ENCODE measurements at regions of chr9 and their contacts with region 1.

Region 1: GRCh38 chr9:126781186-126782052 is 23.4 kb upstream of the ZBTB43 start:
- DNase-seq: no peak
- ATAC-seq: peak; percentile 99
- H3K4me3 ChIP-seq: no peak overlapping the region
- H3K27ac ChIP-seq: no peak overlapping the region
- H3K4me1 ChIP-seq: no peaks in the 10 kb centered on the region
- H3K27me3 ChIP-seq: no peaks in the 10 kb centered on the region; a peak in 1 of 4 replicates
- CTCF ChIP-seq: peak; percentile 91 to 92 (median 91); a peak in 5 of 6 replicates
- EP300 ChIP-seq: no peak
- POLR2A ChIP-seq: no peak
- RAD21 ChIP-seq: peak; percentile 88

Region 2: DNA sequence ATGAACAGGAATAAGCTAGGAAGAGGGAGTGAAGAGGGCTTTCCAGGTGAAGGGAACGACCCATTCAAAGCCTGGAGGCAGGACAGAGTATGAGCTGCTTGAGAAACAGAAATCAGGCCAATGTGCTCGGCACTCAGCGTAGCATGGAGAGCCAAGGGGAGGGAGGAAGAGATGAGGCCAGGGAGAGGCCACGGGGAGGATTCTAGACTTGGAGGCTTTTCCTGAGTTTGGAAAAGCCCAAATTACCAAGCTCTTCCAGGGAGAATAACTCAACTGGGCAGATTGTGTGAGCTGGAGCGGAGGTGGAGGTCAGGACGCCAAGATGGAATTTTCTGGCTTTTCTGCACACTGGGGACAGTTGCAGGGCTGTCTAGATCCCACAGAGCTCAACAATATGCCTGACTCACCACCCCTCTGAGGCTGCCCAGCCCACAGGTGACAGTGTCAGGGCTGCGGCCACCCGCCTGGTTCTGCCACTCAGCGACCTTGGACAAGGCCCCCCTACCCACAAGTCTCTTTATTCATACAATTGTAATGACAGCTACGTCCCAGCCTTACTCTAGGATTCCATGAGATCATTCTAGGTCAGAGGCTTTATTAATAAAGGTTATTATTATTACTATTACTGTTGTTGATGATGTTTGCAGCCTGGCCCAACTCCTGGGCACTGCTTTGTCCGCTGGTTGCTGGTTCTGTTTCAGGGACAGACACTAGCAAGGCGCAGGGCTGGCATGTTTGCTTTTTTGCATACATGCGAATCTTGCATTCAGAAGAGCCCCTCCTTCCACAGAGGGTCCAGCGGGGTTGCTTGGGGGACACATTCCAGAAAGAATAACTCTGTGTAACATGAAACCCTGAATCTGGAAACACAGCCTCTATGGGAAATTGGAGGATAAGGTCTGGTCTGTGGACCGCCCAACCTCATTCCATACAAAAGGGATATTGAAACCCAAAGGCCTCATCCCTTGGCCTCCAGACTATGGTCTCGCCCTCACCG is 177.1 kb before region 1 on chr9:
- CTCF ChIA-PET with region 1: interaction called, 5 read pairs
- POLR2A ChIA-PET with region 1: no interaction called
- RAD21 ChIA-PET with region 1: no interaction called
- SMC1A ChIA-PET with region 1: no interaction called
- in situ Hi-C with region 1: loop called (anchors 5 kb)
- intact Hi-C with region 1: no loop called
- DNase-seq: no peak
- ATAC-seq: no peak
- H3K4me3 ChIP-seq: no peak overlapping the region
- H3K27ac ChIP-seq: no peak overlapping the region
- H3K4me1 ChIP-seq: no peaks in the 10 kb centered on the region
- H3K27me3 ChIP-seq: peaks cover 0 to 2% of the 10 kb centered on the region in 2 experiments; a peak in 3 of 4 replicates
- CTCF ChIP-seq: no peak
- EP300 ChIP-seq: no peak
- POLR2A ChIP-seq: no peak
- RAD21 ChIP-seq: no peak

Region 3: GRCh38 chr9:126611592-126612325 is 169.7 kb before region 1 on chr9:
- CTCF ChIA-PET with region 1: interaction called, 5 read pairs
- POLR2A ChIA-PET with region 1: no interaction called
- RAD21 ChIA-PET with region 1: no interaction called
- SMC1A ChIA-PET with region 1: no interaction called
- in situ Hi-C with region 1: loop called (anchors 5 kb)
- intact Hi-C with region 1: loop called (anchors 5 kb)
- DNase-seq: no peak
- ATAC-seq: peak; percentile 96
- H3K4me3 ChIP-seq: no peak overlapping the region
- H3K27ac ChIP-seq: no peak overlapping the region
- H3K4me1 ChIP-seq: no peaks in the 10 kb centered on the region
- H3K27me3 ChIP-seq: peaks cover 16 to 24% of the 10 kb centered on the region in 2 experiments
- CTCF ChIP-seq: peak; percentile 70 to 78 (median 70)
- EP300 ChIP-seq: no peak
- POLR2A ChIP-seq: no peak
- RAD21 ChIP-seq: peak; percentile 46

Region 4: DNA sequence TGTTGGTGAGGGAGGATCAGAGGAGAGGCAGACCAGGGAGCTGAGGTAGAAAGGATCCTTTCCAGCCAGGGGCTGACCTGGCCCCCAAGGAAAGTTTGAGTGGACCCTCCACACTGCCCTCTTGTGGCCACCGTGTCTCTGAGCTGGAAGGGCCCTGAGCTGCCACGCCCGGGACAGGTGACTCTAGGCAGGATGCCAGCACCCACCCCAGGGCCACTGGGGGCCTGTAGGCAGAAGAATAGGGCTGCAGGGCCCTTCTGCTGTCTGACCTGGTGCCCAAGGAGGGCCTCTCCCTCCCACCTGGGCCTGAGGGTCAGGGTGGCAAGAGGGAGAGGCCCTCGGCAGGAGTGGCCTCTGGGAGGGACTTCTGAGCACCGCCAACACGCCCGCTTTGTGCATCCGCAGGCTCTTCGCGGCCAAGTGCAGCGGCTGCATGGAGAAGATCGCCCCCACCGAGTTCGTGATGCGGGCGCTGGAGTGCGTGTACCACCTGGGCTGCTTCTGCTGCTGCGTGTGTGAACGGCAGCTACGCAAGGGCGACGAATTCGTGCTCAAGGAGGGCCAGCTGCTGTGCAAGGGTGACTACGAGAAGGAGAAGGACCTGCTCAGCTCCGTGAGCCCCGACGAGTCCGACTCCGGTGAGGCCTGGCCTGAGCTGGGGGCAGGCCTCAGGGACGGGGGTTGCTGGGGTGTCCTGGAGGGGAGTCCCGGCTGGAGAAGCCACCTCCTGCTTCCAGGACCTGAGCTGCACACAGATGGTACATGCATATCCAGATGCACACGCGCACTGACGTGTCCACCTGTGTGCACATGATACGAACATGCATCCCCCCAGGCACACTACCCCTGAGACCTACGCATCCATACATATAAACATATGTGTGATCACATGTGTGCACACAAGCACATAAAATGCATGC is 90.7 kb before region 1 on chr9:
- CTCF ChIA-PET with region 1: interaction called, 13 read pairs
- POLR2A ChIA-PET with region 1: no interaction called
- RAD21 ChIA-PET with region 1: no interaction called
- SMC1A ChIA-PET with region 1: interaction called, 8 read pairs
- in situ Hi-C with region 1: no loop called
- intact Hi-C with region 1: no loop called
- DNase-seq: no peak
- ATAC-seq: peak; percentile 92
- H3K4me3 ChIP-seq: no peak overlapping the region
- H3K27ac ChIP-seq: no peak overlapping the region
- H3K4me1 ChIP-seq: no peaks in the 10 kb centered on the region
- H3K27me3 ChIP-seq: peaks cover 0 to 2% of the 10 kb centered on the region in 2 experiments; a peak in 2 of 4 replicates
- CTCF ChIP-seq: peak; percentile 55 to 78 (median 58)
- EP300 ChIP-seq: no peak
- POLR2A ChIP-seq: no peak
- RAD21 ChIP-seq: peak; percentile 27; the same call in 1 of the 2 replicates

Region 5: DNA sequence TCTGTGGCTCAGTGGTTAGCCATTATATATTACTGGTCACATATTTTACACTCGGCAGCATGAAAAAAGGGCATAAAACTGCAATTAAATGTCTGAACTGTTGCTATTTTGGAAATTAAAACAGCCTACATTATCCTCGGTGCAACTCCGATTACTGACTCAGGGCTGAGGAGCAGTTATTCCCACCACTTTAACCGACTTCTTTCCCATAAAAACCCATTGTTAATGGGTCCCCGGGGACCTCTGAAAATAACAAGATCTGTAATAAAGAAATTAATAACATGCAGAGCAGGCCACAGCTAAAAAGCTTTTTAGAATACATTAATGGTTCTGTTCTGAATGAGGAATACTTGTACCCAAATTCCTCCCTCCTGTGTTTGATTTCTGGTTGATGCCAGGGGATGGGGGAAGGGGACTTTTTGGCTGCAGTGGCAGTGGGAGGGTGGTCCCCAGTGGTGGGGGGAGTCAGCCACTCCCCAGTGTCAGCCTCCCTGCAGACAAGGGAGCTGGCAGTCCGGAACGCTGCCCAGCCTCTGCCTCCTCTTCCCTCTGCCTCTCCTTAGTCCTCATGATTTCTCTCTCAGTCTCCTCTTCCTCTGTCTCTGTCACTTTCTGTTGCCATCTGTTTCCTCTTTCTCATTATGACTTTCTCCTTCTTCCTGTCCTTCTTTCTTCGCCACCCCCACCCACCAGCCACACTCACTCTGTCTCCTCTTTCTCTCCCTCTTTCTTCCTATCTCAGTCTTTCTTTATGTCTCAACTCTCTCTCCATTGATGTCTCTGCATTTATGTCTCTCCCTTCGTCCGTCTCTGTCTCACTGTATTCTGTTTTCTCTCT is 35.6 kb before region 1 on chr9:
- CTCF ChIA-PET with region 1: interaction called, 10 read pairs
- POLR2A ChIA-PET with region 1: no interaction called
- RAD21 ChIA-PET with region 1: interaction called, 3 read pairs
- SMC1A ChIA-PET with region 1: no interaction called
- in situ Hi-C with region 1: no loop called
- intact Hi-C with region 1: no loop called
- DNase-seq: no peak
- ATAC-seq: peak; percentile 50
- H3K4me3 ChIP-seq: no peak overlapping the region
- H3K27ac ChIP-seq: no peak overlapping the region
- H3K4me1 ChIP-seq: peaks cover 2% of the 10 kb centered on the region; the same call in 1 of the 2 replicates
- H3K27me3 ChIP-seq: no peaks in the 10 kb centered on the region
- CTCF ChIP-seq: no peak
- EP300 ChIP-seq: no peak
- POLR2A ChIP-seq: no peak
- RAD21 ChIP-seq: no peak

Region 6: DNA sequence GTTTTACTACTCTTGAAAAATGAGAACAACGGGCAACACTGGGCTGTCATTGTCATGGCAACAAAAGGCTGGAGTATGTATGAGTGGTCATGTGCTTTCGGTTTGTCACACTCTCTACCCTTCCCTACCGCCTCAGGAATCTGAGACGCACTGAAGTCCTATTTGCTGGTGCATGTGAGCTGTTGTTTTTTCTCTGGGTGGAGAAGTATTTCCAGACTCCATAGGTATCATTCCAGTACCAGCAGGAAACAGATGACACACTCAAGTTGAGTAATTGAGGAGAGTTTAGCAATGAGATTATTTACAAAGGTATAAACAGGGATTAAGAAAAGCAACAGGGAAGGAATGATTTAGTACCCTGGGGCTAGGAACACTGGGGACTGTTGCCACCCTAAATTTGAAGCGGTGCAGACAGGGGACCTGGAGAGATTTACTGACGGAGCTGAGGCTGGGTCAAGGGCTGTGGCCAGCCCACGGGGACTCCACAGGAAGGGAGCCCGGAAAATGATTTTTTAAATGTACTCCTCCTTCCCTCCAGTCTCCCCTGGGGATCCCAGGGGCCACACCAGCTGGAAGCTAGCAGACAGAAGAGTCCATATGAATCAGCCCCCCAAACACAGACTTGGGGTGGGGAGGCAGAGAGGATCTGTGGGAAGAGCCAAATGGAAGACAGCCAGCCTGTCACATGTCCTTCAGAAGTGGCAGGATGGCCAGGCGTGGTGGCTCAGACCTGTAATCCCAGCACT is 10.2 kb after region 1 on chr9:
- CTCF ChIA-PET with region 1: interaction called, 16 read pairs
- POLR2A ChIA-PET with region 1: no interaction called
- RAD21 ChIA-PET with region 1: no interaction called
- SMC1A ChIA-PET with region 1: interaction called, 3 read pairs
- in situ Hi-C with region 1: no loop called
- intact Hi-C with region 1: no loop called
- DNase-seq: no peak
- ATAC-seq: peak; percentile 51
- H3K4me3 ChIP-seq: no peak overlapping the region
- H3K27ac ChIP-seq: no peak overlapping the region
- H3K4me1 ChIP-seq: no peaks in the 10 kb centered on the region
- H3K27me3 ChIP-seq: peaks cover 1 to 2% of the 10 kb centered on the region in 2 experiments; a peak in 1 of 4 replicates
- CTCF ChIP-seq: no peak
- EP300 ChIP-seq: no peak
- POLR2A ChIP-seq: no peak
- RAD21 ChIP-seq: no peak